Activated naive CD4-positive, alpha-beta T cell treated with anti-CD3 and anti-CD28 coated beads for 36 hours (primary cell): ENCODE measurements at regions of chr11 and their contacts with region 1.

Region 1: GRCh38 chr11:27485930-27486773 is 13.6 kb upstream of the LGR4 start:
- DNase-seq: peak; percentile 57
- H3K4me3 Mint-ChIP-seq: no peak overlapping the region
- H3K27ac Mint-ChIP-seq: no peak overlapping the region
- H3K4me1 Mint-ChIP-seq: no peaks in the 10 kb centered on the region
- H3K27me3 Mint-ChIP-seq: no peaks in the 10 kb centered on the region

Region 2: GRCh38 chr11:26286472-26287066 is 1199.6 kb before region 1 on chr11:
- CTCF ChIA-PET with region 1: no interaction called
- intact Hi-C with region 1: loop called (anchors 2 kb)
- DNase-seq: no peak
- H3K4me3 Mint-ChIP-seq: no peak overlapping the region
- H3K27ac Mint-ChIP-seq: no peak overlapping the region
- H3K4me1 Mint-ChIP-seq: peaks cover 2% of the 10 kb centered on the region
- H3K27me3 Mint-ChIP-seq: peaks cover 12% of the 10 kb centered on the region

Region 3: DNA sequence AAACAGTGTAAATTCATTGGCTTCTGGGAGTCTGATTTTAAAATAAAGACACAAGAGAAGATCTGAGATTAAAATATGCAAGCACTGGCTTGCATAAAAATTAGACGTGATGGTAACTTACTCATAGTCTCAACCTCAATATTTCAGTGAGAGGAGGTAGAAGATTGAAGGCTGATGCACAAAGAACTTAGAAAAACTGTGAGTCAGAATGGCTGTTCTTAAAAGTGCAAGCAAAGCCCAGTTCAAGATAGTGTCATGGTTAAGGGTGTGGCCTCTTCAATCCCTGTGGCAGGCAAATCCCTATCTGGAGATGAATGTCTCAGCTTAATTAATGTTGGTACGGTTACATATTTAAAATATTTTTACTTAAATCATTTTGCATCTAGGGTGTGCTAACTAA is 525.9 kb before region 1 on chr11:
- CTCF ChIA-PET with region 1: no interaction called
- intact Hi-C with region 1: no loop called
- DNase-seq: no peak
- H3K4me3 Mint-ChIP-seq: no peak overlapping the region
- H3K27ac Mint-ChIP-seq: no peak overlapping the region
- H3K4me1 Mint-ChIP-seq: no peaks in the 10 kb centered on the region
- H3K27me3 Mint-ChIP-seq: no peaks in the 10 kb centered on the region

Region 4: DNA sequence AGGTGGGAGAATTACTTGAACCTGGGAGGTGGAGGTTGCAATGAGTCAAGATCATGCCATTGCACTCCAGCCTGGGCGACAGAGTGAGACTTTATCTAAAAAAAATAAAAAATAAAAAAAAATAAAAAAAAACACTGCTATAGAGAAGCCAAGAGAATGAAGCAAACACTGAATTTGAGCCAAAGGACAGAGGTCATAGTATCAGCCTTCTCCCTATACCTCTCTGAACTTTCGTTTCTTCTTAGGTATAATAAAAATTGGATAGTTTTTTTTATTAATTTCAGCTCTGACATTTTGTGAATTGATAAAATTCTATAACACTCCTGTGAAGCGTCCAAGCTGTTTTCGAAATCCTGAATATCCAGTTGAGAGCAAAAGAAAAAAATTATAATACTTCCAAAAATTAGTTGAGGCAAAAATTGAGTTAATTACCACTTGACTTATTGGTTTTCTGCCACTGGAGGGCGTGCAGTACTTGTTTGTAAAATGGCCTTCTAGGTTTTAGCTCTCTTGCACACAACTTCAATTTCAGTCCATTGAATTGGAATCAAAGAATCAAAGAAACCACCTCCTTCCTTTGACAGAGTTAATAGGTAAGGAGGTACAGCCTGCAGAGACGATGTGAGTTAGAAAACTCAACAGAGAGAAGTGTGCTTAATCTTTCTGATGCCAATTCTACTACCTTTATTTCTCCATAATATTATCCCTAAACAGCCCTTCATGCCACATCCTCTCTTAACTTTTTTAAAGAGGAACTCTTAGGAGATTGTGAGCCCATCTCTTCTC is 302.3 kb before region 1 on chr11:
- CTCF ChIA-PET with region 1: interaction called, 87 read pairs
- intact Hi-C with region 1: loop called (anchors 1 kb)
- DNase-seq: peak; percentile 68
- H3K4me3 Mint-ChIP-seq: no peak overlapping the region
- H3K27ac Mint-ChIP-seq: no peak overlapping the region
- H3K4me1 Mint-ChIP-seq: no peaks in the 10 kb centered on the region
- H3K27me3 Mint-ChIP-seq: peaks cover 16% of the 10 kb centered on the region

Region 5: GRCh38 chr11:27296497-27296896 is 189.7 kb before region 1 on chr11:
- CTCF ChIA-PET with region 1: no interaction called
- intact Hi-C with region 1: loop called (anchors 1 kb)
- DNase-seq: no peak
- H3K4me3 Mint-ChIP-seq: no peak overlapping the region
- H3K27ac Mint-ChIP-seq: no peak overlapping the region
- H3K4me1 Mint-ChIP-seq: peaks cover 5% of the 10 kb centered on the region
- H3K27me3 Mint-ChIP-seq: peaks cover 12% of the 10 kb centered on the region

Region 6: DNA sequence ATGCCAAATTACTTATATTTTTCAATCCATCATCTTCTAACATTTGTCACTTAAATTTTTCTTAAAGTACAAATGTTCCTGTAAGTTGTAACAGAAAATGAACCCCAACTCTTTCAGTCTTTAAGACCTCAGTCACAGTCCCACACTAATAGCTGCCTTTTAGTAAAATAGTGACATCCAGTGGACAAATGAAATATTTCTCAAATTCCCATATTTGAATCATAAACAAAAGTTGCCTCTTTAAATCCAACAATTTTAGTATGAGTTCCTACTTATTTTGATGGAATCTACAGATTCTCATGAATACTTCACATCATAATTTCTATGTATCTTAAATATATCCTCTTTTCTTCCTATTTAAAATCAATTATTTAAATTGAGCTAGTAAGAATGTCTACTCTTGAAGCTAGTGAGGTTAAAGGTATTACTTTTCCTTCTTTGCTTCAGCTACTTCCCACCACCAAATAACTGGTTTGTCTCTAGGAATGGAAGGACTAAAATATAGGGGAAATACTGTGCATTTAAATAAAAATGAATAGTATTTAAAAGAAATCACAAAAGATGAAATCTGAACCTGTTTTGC is 11.2 kb after region 1 on chr11:
- CTCF ChIA-PET with region 1: interaction called, 50 read pairs
- intact Hi-C with region 1: no loop called
- DNase-seq: no peak
- H3K4me3 Mint-ChIP-seq: no peak overlapping the region
- H3K27ac Mint-ChIP-seq: no peak overlapping the region
- H3K4me1 Mint-ChIP-seq: peaks cover 19% of the 10 kb centered on the region
- H3K27me3 Mint-ChIP-seq: no peaks in the 10 kb centered on the region